Activated B cell treated with CpG ODN at 0.5 μM for 24 hours (primary cell): ENCODE measurements at regions of chr6 and their contacts with region 1.

Region 1: GRCh38 chr6:152301764-152302568 is 335.2 kb downstream of the SYNE1 start:
- DNase-seq: peak; percentile 82
- ATAC-seq: peak; percentile 97
- H3K4me3 Mint-ChIP-seq: peak overlapping the region; percentile 100
- H3K27ac Mint-ChIP-seq: peak overlapping the region; percentile 100
- H3K4me1 Mint-ChIP-seq: peaks cover 40% of the 10 kb centered on the region
- H3K27me3 Mint-ChIP-seq: no peaks in the 10 kb centered on the region
- CTCF ChIP-seq: no peak

Region 2: GRCh38 chr6:152982768-152983636 is 681.0 kb after region 1 on chr6 and contains the start of gene FBXO5:
- CTCF ChIA-PET with region 1: no interaction called
- POLR2A ChIA-PET with region 1: no interaction called
- intact Hi-C with region 1: loop called (anchors 5 kb)
- DNase-seq: peak; percentile 95
- ATAC-seq: peak; percentile 92
- H3K4me3 Mint-ChIP-seq: peak within 1 kb of the TSS; percentile 100
- H3K27ac Mint-ChIP-seq: peak within 1 kb of the TSS; percentile 100
- H3K4me1 Mint-ChIP-seq: peaks cover 41% of the 10 kb centered on the region
- H3K27me3 Mint-ChIP-seq: no peaks in the 10 kb centered on the region
- CTCF ChIP-seq: no peak
- total RNA-seq, gene FBXO5: 11.9 and 13.3 TPM in 2 replicates

Region 3: GRCh38 chr6:153002607-153003365 is 700.8 kb after region 1 on chr6 and contains the start of gene MTRF1L:
- CTCF ChIA-PET with region 1: no interaction called
- POLR2A ChIA-PET with region 1: no interaction called
- intact Hi-C with region 1: loop called (anchors 5 kb)
- DNase-seq: peak; percentile 77
- ATAC-seq: peak; percentile 85
- H3K4me3 Mint-ChIP-seq: peak within 1 kb of the TSS; percentile 99
- H3K27ac Mint-ChIP-seq: peak within 1 kb of the TSS; percentile 93
- H3K4me1 Mint-ChIP-seq: peaks cover 42% of the 10 kb centered on the region
- H3K27me3 Mint-ChIP-seq: no peaks in the 10 kb centered on the region
- CTCF ChIP-seq: no peak
- total RNA-seq, gene MTRF1L: 20.7 and 21.3 TPM in 2 replicates